Psoas muscle (tissue), 8 donors: ENCODE measurements at regions of chr14 and their contacts with region 1.

Region 1: DNA sequence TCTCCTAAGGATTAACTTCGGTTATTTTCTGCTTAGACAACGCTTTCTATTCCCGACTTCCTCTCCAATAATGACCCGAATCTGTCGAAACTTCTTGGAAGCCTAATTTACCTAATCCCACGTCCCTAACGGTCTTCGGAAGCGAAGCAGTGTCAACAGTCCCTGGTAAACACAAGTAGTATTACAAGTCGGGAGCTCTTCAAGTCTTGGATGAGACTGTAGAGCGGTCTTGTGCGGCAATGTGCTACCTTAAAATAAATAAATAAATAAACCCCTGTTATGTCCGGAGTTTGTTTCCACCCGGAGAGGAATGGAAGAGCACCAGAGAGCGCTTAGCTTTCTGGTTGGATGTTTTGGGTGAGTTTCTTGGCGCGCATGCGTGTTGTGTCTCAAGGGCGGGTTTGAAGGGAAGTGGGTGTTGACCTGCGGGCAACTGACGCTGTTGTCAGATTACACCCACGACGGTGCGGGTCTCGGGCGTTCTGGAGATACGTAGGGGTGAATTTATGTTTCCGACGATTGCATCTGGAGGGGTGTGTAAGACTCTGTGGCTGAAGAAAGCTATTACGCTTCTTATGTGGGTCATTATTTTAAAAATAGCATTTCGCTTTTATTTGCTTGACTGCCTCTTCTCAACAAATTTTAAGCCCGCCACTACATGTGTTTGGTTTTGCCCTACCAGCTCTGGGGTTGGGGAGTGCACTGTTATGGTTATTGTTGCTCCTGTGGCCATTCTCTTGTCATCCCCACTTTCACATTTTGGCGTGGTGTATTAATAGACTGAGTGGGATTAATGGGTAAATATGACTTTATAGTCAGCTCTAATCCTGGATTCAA is at the starts of genes KIAA0586 and TIMM9:
- DNase-seq: peak; percentile 97 to 98
- ATAC-seq: peak; percentile 97 to 99 (median 98)
- H3K4me3 ChIP-seq: peak within 1 kb of the TSS; percentile 88
- H3K27ac ChIP-seq: peak within 1 kb of the TSS; percentile 98
- H3K4me1 ChIP-seq: peaks cover 23% of the 10 kb centered on the region
- H3K27me3 ChIP-seq: no peaks in the 10 kb centered on the region
- CTCF ChIP-seq: no peak
- total RNA-seq, gene KIAA0586: 5.0 to 14.2 (median 8.3) TPM
- total RNA-seq, gene TIMM9: 44.2 to 55.6 (median 50.2) TPM

Region 2: DNA sequence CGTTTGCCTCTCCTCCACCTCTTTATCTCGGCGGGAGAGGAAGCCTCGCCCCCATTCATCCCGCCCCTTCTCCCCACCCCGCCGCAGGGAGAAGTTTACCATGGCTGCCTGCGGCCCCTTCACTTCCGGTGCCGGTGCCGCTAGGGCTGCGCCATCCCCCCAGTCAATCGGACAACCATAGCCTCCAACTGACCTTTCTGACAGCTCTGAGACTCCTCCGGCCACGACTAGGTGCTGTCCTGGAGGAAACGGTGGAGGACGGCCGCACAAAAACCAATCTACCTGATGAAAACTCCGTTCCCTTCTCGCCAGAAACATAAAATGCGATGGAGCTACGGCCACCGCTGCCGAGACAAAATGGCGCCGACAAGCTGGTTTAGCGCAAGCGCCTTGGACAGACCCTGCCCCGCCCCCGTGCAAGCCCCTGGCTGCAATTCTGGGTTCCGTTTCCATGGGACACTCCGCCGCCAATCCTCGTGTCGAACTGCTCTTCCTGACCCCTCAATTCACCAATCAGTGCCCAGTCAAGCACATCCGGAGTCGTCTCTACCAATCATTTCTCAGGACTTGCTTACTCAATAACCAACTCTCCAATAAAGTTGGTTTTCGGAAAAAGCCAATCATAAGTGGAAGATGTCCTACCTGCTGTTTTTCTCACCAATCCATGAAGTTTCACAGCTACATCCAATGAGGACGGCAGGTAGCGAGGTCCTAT is 129.6 kb before region 1 on chr14:
- intact Hi-C with region 1: loop called in 1 of 2 experiments (anchors 2 kb)
- DNase-seq: peak; percentile 99
- ATAC-seq: peak; percentile 95 to 97 (median 96)
- H3K4me3 ChIP-seq: peak overlapping the region; percentile 95
- H3K27ac ChIP-seq: peak overlapping the region; percentile 95
- H3K4me1 ChIP-seq: peaks cover 34% of the 10 kb centered on the region
- H3K27me3 ChIP-seq: no peaks in the 10 kb centered on the region
- CTCF ChIP-seq: peak; percentile 4